ENCODE measurements at regions of chr20 and their contacts with region 1.

Region 1: DNA sequence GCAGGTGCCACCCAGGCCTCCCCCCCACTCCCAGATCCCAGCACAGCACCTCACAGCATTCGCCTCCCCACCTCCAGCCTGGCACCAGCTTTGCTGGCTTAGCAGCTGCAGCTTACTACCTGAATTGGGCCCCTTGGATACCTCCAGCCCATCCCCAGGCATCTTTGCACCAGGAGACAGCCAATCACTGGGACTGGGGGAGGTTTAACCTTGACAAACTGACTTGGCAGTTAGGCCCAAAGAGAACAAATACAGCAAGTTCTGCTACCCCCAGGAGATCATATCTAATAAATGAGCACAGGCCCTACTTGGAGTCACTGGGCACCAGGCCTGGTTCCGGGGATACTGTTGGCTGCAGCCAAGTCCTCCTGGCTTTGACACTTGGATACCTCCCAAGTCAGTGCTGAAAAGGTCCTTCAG is 8.8 kb downstream of the PDRG1 start:
- DNase-seq: no peak
- H3K4me3 ChIP-seq: no peak overlapping the region
- CTCF ChIP-seq: no peak

Region 2: GRCh38 chr20:31859998-31860709 is 82.9 kb before region 1 on chr20:
- in situ Hi-C with region 1: loop called (anchors 10 kb)
- DNase-seq: no peak
- H3K4me3 ChIP-seq: no peak overlapping the region
- CTCF ChIP-seq: no peak

Region 3: DNA sequence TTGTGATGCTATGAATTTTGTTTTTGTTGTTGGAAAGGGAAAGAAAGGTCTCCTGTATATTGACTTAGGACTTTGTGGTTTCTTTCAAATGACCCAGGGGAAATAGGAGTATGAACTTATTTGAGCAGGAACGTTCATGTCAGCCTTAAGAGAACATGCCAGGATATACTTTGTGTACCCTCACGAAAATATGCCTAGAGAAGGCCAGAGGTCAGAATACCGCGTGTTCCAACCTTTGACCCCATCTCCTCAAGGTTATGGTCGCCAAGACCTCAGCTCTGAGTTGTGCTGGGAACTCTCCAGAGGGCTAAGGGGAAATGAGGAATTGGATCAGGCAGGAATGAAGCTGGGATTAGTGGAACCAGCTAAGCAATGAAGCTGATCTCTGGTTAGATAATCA is 61.1 kb before region 1 on chr20:
- in situ Hi-C with region 1: loop called (anchors 5 kb)
- DNase-seq: no peak
- H3K4me3 ChIP-seq: no peak overlapping the region
- CTCF ChIP-seq: no peak

Measured in astrocyte of the cerebellum (primary cell).